ENCODE measurements at regions of chrX and their contacts with region 1.

Region 1: GRCh38 chrX:13569479-13570260 is at the start of gene EGFL6:
- DNase-seq: no peak
- H3K4me3 ChIP-seq: no peak within 1 kb of the TSS
- H3K27ac ChIP-seq: no peak within 1 kb of the TSS
- H3K4me1 ChIP-seq: no peaks in the 10 kb centered on the region
- H3K27me3 ChIP-seq: peaks cover 18% of the 10 kb centered on the region
- CTCF ChIP-seq: no peak
- total RNA-seq, gene EGFL6: not detected in 2 replicates

Region 2: DNA sequence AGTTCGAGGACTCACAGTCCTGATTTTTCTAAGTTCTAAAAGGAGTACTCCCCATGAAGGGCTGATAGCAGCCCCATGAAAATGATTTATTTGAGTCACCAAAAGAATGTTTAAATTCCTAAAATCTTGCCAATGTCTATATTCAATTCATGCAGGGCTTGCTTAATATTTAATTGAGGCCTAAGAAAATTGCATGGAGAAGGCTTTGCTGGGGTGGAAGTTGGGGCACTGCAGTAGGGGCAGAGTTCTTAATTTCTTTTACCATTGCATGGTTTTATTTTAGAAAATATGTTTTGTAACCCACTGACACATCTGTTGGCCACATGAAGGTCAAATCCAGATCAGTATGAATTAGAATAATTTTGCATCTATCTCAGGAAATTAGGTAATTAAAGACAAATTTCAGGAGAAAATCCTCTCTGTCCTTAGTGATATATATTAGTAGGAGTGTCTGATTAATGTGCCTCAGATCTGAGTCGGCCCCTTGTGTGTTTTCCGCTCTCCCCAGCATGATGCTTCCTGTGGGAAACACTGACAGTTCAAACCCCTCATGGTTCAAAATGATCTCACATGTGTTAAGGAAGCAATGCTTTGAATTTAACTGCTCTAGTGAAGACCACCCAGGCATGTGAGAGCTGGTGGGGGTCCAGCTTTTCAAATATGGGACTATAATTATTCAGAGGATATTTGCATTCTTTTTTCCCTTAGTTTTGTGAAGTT is 54.3 kb before region 1 on chrX:
- CTCF ChIA-PET with region 1: no interaction called
- POLR2A ChIA-PET with region 1: no interaction called
- intact Hi-C with region 1: loop called (anchors 2 kb)
- DNase-seq: peak; percentile 95
- H3K4me3 ChIP-seq: no peak overlapping the region
- H3K27ac ChIP-seq: peak overlapping the region; percentile 38
- H3K4me1 ChIP-seq: peaks cover 23% of the 10 kb centered on the region
- H3K27me3 ChIP-seq: no peaks in the 10 kb centered on the region
- CTCF ChIP-seq: no peak

Region 3: DNA sequence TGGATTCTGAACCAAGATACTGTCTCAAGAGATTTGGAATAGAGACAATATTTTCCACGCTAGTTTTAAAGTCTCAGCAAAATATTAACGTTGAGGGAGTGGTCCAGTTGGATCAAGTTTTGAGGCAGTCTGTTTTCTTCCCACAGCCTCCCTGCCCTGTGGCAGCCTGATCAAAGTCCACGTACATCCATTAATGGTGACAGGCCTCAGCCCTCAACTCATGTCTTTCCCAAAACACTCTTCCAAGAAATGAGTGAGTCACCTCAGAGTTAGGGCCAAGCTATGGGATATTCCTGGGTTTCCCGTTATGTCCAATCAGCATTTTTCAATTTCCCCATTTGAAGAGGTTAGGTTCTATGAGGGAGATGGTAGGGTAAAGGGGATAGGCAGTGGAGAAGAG is 28.2 kb after region 1 on chrX:
- CTCF ChIA-PET with region 1: no interaction called
- POLR2A ChIA-PET with region 1: no interaction called
- intact Hi-C with region 1: no loop called
- DNase-seq: no peak
- H3K4me3 ChIP-seq: no peak overlapping the region
- H3K27ac ChIP-seq: no peak overlapping the region
- H3K4me1 ChIP-seq: no peaks in the 10 kb centered on the region
- H3K27me3 ChIP-seq: peaks cover 8% of the 10 kb centered on the region
- CTCF ChIP-seq: no peak